ENCODE measurements at regions of chr5 and their contacts with region 1.

Region 1: GRCh38 chr5:150560401-150561193 is 52.7 kb downstream of the NDST1 start:
- DNase-seq: peak; percentile 84
- H3K4me3 Mint-ChIP-seq: no peak overlapping the region
- H3K27ac Mint-ChIP-seq: no peak overlapping the region
- H3K4me1 Mint-ChIP-seq: no peaks in the 10 kb centered on the region
- H3K27me3 Mint-ChIP-seq: peaks cover 4% of the 10 kb centered on the region

Region 2: GRCh38 chr5:150656191-150657132 is 95.9 kb after region 1 on chr5:
- CTCF ChIA-PET with region 1: interaction called, 18 read pairs
- POLR2A ChIA-PET with region 1: no interaction called
- DNase-seq: peak; percentile 84
- H3K4me3 Mint-ChIP-seq: peak overlapping the region; percentile 76
- H3K27ac Mint-ChIP-seq: no peak overlapping the region
- H3K4me1 Mint-ChIP-seq: peaks cover 7% of the 10 kb centered on the region
- H3K27me3 Mint-ChIP-seq: peaks cover 7% of the 10 kb centered on the region